ENCODE measurements at regions of chr3 and their contacts with region 1.

Region 1: DNA sequence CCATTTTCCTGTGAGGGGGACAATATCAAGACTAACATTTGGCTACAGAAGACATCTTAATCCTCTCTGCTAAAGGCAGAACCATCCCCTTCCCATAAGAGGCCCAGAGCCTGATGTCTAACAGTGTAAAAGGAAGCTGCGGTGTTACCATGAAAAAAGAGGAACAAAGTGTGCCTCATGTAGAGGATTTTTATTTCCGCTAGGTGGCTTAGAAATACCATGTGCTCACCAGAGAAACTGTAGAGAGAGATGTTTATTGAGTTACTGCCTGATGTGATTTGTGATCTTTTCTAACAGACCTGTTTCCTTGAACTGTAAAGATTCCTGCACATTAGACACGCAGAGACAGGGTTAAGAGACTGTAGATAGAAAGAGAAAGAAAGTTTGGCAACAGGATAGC is 22.0 kb downstream of the OR5H15 start:
- DNase-seq: no peak
- H3K4me3 ChIP-seq: no peak overlapping the region
- H3K27ac ChIP-seq: no peak overlapping the region
- H3K27me3 ChIP-seq: no peaks in the 10 kb centered on the region
- CTCF ChIP-seq: peak in 27 of 56 donors; percentile 10 to 48 (median 25)

Region 2: GRCh38 chr3:98246142-98246541 is 57.6 kb after region 1 on chr3:
- intact Hi-C with region 1: no loop called
- DNase-seq: no peak
- H3K4me3 ChIP-seq: no peak overlapping the region
- H3K27ac ChIP-seq: no peak overlapping the region
- H3K27me3 ChIP-seq: peaks cover 0 to 4% (median 0%) of the 10 kb centered on the region in 45 donors
- CTCF ChIP-seq: no peak

Region 3: DNA sequence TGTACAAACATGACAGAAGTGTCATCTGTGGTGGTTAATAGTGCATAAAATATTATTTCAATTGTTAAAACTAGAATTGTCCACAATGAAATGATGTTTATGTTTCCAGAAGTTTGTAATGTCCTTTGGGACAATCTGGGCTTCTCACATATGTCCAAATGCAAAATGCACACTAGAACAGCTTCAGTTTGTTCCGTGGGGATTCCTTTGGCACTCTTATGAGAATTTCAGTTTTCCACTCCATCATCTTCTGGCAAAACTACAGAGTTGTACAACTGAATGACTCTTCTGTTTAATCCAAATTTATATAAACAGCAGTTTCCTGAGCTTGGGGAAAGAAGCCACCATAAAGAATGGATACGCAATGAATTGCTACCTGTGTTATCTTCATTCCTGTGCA is 73.5 kb after region 1 on chr3:
- intact Hi-C with region 1: loop called in 1 of 2 experiments (anchors 2 kb)
- DNase-seq: no peak
- H3K4me3 ChIP-seq: no peak overlapping the region
- H3K27ac ChIP-seq: no peak overlapping the region
- H3K27me3 ChIP-seq: no peaks in the 10 kb centered on the region
- CTCF ChIP-seq: no peak